ENCODE measurements at regions of chr12 and their contacts with region 1.

Region 1: GRCh38 chr12:118164798-118165486 is 29.0 kb downstream of the PEBP1 start:
- H3K4me3 ChIP-seq: no peak overlapping the region
- H3K27ac ChIP-seq: no peak overlapping the region
- H3K4me1 ChIP-seq: no peaks in the 10 kb centered on the region
- CTCF ChIP-seq: peak; percentile 44; the same call in 1 of the 2 replicates

Region 2: DNA sequence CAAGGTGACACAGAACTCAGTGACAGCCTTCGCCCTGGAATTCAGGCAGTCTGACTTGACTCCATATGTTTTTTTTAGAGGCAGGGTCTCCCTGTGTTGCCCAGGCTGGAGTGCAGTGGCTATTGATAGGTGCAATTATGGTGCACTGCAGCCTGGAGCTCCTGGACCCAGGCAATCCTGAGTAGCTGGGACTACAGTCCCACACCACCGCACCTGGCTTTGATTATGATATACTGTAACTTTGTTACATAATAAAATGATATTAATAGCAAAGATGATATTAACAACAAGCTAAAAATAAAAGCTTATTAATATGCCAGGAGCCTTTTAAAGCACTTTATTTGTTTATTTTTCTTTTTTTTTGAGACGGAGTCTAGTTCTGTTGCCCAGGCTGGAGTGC is 70.9 kb before region 1 on chr12:
- CTCF ChIA-PET with region 1: no interaction called
- POLR2A ChIA-PET with region 1: no interaction called
- H3K4me3 ChIP-seq: no peak overlapping the region
- H3K27ac ChIP-seq: no peak overlapping the region
- H3K4me1 ChIP-seq: no peaks in the 10 kb centered on the region; the same call in 1 of the 2 replicates
- CTCF ChIP-seq: no peak

Region 3: DNA sequence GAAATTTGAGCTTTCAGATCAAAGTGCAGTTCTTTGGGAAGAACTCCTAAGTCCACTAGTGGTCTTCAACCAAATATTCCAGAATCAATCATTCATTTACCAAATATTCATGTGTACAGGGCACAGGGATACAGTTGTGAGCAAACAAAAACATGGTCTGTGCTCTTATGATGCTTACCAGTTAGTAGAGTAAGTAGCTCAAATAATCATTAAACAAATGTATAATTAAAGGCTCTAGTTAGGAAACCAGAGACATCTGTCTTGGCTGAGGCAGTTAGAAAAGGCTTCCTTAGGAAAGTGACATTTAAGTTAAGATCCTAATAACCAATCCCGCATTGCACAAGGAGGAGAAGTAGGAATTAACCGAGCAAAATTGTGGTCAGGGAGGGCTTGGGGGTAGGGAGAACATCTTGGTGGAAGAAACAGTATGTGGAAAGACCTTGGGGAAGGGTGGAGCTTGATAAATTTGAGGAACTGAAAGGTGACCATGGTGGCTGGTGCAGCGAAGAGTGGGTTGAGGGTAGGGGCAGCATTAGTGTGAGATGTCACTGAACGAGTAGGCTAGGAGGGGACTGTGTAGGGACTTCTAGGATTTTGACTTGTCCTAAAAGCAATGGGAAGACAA is 11.0 kb after region 1 on chr12:
- CTCF ChIA-PET with region 1: interaction called, 14 read pairs
- POLR2A ChIA-PET with region 1: no interaction called
- H3K4me3 ChIP-seq: no peak overlapping the region
- H3K27ac ChIP-seq: no peak overlapping the region
- H3K4me1 ChIP-seq: no peaks in the 10 kb centered on the region
- CTCF ChIP-seq: no peak

Measured in HEK293 (cell line).